CD4-positive, alpha-beta T cell (primary cell): ENCODE measurements at regions of chr12 and their contacts with region 1.

Region 1: GRCh38 chr12:4269279-4269991 is 4.1 kb upstream of the CCND2 start:
- DNase-seq: peak; percentile 85 to 96 (median 90)
- ATAC-seq: peak; percentile 32
- H3K4me3 ChIP-seq: peak overlapping the region; percentile 95
- H3K4me3 Mint-ChIP-seq: peak overlapping the region; percentile 96
- H3K27ac ChIP-seq: peak overlapping the region; percentile 79 to 99
- H3K27ac Mint-ChIP-seq: peak overlapping the region; percentile 99
- H3K4me1 ChIP-seq: peaks cover 46% of the 10 kb centered on the region
- H3K4me1 Mint-ChIP-seq: peaks cover 31% of the 10 kb centered on the region
- H3K27me3 ChIP-seq: no peaks in the 10 kb centered on the region
- H3K27me3 Mint-ChIP-seq: peaks cover 6% of the 10 kb centered on the region
- CTCF ChIP-seq: no peak

Region 2: GRCh38 chr12:4107436-4107878 is 162.0 kb before region 1 on chr12:
- CTCF ChIA-PET with region 1: interaction called, 6 read pairs
- POLR2A ChIA-PET with region 1: interaction called, 11 read pairs
- intact Hi-C with region 1: no loop called
- DNase-seq: peak; percentile 30 to 92 (median 54)
- ATAC-seq: peak; percentile 99
- H3K4me3 ChIP-seq: no peak overlapping the region
- H3K4me3 Mint-ChIP-seq: no peak overlapping the region
- H3K27ac ChIP-seq: no peak overlapping the region
- H3K27ac Mint-ChIP-seq: peak overlapping the region; percentile 71
- H3K4me1 ChIP-seq: peaks cover 10% of the 10 kb centered on the region
- H3K4me1 Mint-ChIP-seq: peaks cover 12% of the 10 kb centered on the region
- H3K27me3 ChIP-seq: no peaks in the 10 kb centered on the region
- H3K27me3 Mint-ChIP-seq: no peaks in the 10 kb centered on the region
- CTCF ChIP-seq: peak; percentile 81

Region 3: DNA sequence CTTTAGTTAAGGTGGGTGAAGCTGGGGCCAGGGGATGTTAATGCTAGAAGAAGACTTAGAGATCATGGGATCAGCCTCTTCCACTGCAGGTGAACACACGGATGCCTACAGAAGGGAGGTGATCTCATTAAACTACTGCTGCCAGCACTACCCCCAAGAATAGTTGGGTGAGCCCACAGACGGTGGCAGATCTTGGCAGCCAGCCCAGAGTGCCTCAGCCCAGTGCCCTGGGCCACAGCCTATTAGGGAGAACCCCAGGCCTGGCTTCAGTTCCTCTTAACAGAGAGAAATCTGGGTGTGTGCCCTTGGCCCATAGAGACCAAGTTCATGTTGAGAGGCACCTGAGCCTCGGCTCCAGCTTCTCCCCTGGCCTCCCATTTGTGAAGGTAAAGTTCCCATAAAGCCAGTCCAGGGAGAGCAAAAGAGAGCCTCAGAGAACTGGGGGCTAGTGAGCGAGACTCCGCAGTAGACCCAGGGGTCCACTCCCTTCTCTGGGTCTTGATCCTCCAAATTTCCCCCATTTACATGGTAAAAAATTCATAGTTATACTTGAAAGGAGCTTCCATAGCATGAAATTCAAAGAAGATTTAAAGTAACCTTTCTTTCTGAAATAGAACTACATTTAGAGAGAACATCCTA is 120.9 kb before region 1 on chr12:
- CTCF ChIA-PET with region 1: interaction called, 14 read pairs
- POLR2A ChIA-PET with region 1: interaction called, 113 read pairs
- intact Hi-C with region 1: loop called in 1 of 2 experiments (anchors 1 kb)
- DNase-seq: peak in 11 of 14 experiments; percentile 16 to 82 (median 43)
- ATAC-seq: peak; percentile 56
- H3K4me3 ChIP-seq: no peak overlapping the region
- H3K4me3 Mint-ChIP-seq: no peak overlapping the region
- H3K27ac ChIP-seq: no peak overlapping the region
- H3K27ac Mint-ChIP-seq: no peak overlapping the region
- H3K4me1 ChIP-seq: peaks cover 51% of the 10 kb centered on the region
- H3K4me1 Mint-ChIP-seq: peaks cover 47% of the 10 kb centered on the region
- H3K27me3 ChIP-seq: no peaks in the 10 kb centered on the region
- H3K27me3 Mint-ChIP-seq: no peaks in the 10 kb centered on the region
- CTCF ChIP-seq: no peak

Region 4: DNA sequence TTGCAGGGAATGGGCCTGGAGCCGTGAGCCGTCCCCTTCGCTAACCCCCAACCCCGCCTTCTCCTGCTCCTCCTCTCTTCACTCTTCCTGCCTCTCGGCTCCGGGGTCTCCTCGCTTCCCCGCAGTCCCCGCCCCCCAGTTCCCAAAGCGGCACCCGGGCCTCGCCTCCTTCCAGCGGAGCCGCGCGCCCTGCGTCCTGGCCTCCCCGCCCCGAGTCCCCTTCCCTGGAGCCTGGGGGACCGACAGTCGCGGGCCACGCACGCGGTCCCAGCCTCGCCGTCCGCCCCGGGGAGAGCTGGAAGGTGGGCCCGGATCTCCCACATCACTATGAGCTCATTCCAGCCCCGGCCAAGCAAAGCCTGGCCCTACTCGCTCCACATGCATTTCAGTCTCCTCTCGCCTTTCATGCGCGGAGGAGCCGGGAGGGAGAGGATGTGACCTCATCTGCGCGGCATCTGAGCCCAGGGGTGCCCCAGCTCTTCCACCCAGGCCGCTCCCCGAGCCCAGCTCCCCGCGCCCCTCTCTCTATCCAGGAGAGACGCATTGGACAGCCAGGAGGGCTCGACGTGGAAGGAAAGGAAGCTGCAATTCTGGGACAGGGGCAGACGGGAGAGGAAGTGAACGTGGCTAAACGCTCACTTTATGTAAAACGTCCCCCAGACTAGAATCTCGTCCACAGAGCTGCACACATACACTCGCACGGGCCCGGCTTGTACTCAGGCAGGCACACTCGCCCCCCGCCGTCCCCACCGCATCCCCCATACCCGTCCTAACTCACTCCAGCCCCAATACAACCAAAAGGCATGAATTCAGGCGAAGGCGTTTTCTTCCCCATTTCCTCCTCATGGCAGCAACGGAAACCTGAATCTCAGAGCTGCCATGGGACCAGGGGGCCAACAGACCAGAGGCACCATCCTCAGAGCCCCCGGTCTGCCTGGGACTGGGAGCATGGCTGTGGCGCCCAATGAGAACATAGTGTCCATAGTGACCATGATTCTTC is 104.6 kb before region 1 on chr12:
- CTCF ChIA-PET with region 1: no interaction called
- POLR2A ChIA-PET with region 1: interaction called, 23 read pairs
- intact Hi-C with region 1: no loop called
- DNase-seq: peak in 13 of 14 experiments; percentile 33 to 75 (median 45)
- ATAC-seq: peak; percentile 96
- H3K4me3 ChIP-seq: peak overlapping the region; percentile 66
- H3K4me3 Mint-ChIP-seq: peak overlapping the region; percentile 92
- H3K27ac ChIP-seq: peak overlapping the region in 1 of 2 donors; percentile 18
- H3K27ac Mint-ChIP-seq: peak overlapping the region; percentile 83
- H3K4me1 ChIP-seq: peaks cover 14% of the 10 kb centered on the region
- H3K4me1 Mint-ChIP-seq: peaks cover 19% of the 10 kb centered on the region
- H3K27me3 ChIP-seq: no peaks in the 10 kb centered on the region
- H3K27me3 Mint-ChIP-seq: no peaks in the 10 kb centered on the region
- CTCF ChIP-seq: no peak

Region 5: GRCh38 chr12:4251216-4251891 is 18.1 kb before region 1 on chr12:
- CTCF ChIA-PET with region 1: interaction called, 6 read pairs
- POLR2A ChIA-PET with region 1: interaction called, 11 read pairs
- intact Hi-C with region 1: loop called in 1 of 2 experiments (anchors 1 kb)
- DNase-seq: peak in 7 of 14 experiments; percentile 16 to 73 (median 25)
- ATAC-seq: peak; percentile 99
- H3K4me3 ChIP-seq: no peak overlapping the region
- H3K4me3 Mint-ChIP-seq: no peak overlapping the region
- H3K27ac ChIP-seq: no peak overlapping the region
- H3K27ac Mint-ChIP-seq: no peak overlapping the region
- H3K4me1 ChIP-seq: peaks cover 4% of the 10 kb centered on the region
- H3K4me1 Mint-ChIP-seq: peaks cover 7% of the 10 kb centered on the region
- H3K27me3 ChIP-seq: no peaks in the 10 kb centered on the region
- H3K27me3 Mint-ChIP-seq: no peaks in the 10 kb centered on the region
- CTCF ChIP-seq: peak; percentile 33